SK-N-SH (cell line): ENCODE measurements at regions of chr5 and their contacts with region 1.

Region 1: GRCh38 chr5:150458819-150459557 is 9.4 kb upstream of the RPS14 start:
- DNase-seq: peak; percentile 93
- H3K4me3 ChIP-seq: no peak overlapping the region; a peak in 2 of 4 replicates
- H3K27ac ChIP-seq: no peak overlapping the region
- H3K4me1 ChIP-seq: peaks cover 0 to 8% of the 10 kb centered on the region in 2 experiments; a peak in 2 of 4 replicates
- H3K27me3 ChIP-seq: no peaks in the 10 kb centered on the region
- CTCF ChIP-seq: peak; percentile 70
- EP300 ChIP-seq: no peak
- RAD21 ChIP-seq: peak; percentile 83

Region 2: DNA sequence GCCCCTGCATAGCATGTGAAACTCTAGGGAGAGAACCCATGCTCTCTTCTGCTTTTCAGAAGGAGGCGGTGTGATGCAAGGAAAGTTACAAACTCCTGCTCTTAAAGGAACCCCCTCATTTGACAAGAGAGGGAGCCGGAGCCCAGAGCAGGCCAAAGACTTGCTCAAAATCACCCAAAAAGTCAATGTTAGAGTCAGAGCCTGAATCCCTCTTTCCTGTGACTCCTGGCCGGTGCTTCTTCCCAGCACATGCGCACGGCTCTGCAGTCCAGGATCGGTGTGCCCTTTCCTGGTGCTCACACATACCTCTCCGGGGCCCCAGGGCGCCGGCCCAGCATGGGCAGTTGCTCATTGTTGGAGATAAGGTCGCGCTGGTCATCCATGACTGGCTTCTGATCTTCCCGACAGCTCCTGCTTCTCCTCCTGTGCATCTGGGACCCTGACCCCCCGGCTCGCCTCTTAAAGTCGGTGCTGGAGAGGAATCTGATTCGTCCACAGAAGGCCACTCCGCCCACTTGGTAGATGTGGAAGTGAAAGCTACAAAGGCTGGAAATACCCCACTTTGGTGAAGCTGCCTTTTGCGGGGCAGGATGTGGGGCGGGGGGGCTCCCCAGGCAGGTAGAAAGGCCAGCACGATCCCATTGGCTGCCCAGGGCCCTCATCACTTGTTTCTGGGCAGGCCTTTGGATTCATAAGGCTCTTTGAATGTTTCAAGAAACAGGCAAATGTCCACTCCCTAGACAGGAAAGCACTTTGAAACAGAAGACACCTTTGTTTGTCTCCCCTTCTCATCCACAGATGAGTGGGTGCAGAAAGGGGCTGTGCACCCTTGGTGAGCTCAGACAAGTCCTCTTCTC is 46.4 kb before region 1 on chr5 and contains the start of gene CD74:
- CTCF ChIA-PET with region 1: no interaction called
- POLR2A ChIA-PET with region 1: no interaction called
- DNase-seq: peak; percentile 53
- H3K4me3 ChIP-seq: no peak within 1 kb of the TSS
- H3K27ac ChIP-seq: no peak within 1 kb of the TSS
- H3K4me1 ChIP-seq: peaks cover 4 to 8% of the 10 kb centered on the region in 2 experiments; a peak in 3 of 4 replicates
- H3K27me3 ChIP-seq: no peaks in the 10 kb centered on the region
- CTCF ChIP-seq: no peak
- EP300 ChIP-seq: no peak
- RAD21 ChIP-seq: no peak
- polyA plus RNA-seq, gene CD74: 0.15 and 0.26 TPM in 2 replicates

Region 3: DNA sequence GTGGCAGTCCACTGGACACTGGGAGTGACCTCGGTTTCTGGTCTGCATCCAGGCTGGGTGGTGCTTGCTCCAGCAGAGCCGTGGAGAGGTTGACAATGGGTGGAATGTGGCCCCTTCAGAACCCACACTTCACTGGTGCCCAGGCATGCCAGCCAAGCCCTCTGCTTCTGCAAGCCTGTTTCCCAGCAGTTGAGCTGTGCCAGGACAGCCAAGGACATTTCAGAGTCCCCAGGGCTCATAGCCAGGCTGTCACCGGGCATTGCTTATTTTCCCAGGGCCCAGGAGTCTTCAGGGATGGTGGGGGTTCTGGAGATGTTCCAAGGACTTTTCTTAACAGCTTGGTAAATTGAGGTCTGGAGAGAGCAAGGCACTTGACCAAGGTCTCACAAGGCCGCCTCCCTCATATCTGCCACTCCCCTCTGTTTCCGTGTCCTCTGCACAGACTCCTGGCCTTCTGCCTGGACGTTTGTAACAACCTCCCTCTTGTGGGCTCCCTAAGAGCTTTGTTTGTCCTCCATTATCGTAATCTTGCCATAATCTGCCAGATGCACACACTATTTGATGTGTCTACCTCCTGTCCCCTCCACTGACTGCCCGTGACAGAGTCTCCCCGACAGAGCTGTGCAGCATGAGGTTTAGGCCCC is 45.1 kb after region 1 on chr5:
- CTCF ChIA-PET with region 1: interaction called, 14 read pairs
- POLR2A ChIA-PET with region 1: no interaction called
- DNase-seq: peak; percentile 83
- H3K4me3 ChIP-seq: no peak overlapping the region
- H3K27ac ChIP-seq: peak overlapping the region in 1 of 2 experiments; percentile 97; a peak in 2 of 4 replicates
- H3K4me1 ChIP-seq: peaks cover 0 to 81% of the 10 kb centered on the region in 2 experiments; a peak in 3 of 4 replicates
- H3K27me3 ChIP-seq: no peaks in the 10 kb centered on the region
- CTCF ChIP-seq: no peak
- EP300 ChIP-seq: peak in 1 of 2 experiments; percentile 71; a peak in 2 of 4 replicates
- RAD21 ChIP-seq: peak; percentile 42

Region 4: GRCh38 chr5:150523472-150524350 is 64.7 kb after region 1 on chr5:
- CTCF ChIA-PET with region 1: interaction called, 83 read pairs
- POLR2A ChIA-PET with region 1: no interaction called
- DNase-seq: peak; percentile 79
- H3K4me3 ChIP-seq: no peak overlapping the region; a peak in 1 of 4 replicates
- H3K27ac ChIP-seq: peak overlapping the region in 1 of 2 experiments; percentile 7; a peak in 1 of 4 replicates
- H3K4me1 ChIP-seq: peaks cover 0 to 11% of the 10 kb centered on the region in 2 experiments; a peak in 1 of 4 replicates
- H3K27me3 ChIP-seq: no peaks in the 10 kb centered on the region
- CTCF ChIP-seq: peak; percentile 74
- EP300 ChIP-seq: no peak
- RAD21 ChIP-seq: peak; percentile 78

Region 5: GRCh38 chr5:150544611-150545219 is 85.7 kb after region 1 on chr5:
- CTCF ChIA-PET with region 1: interaction called, 56 read pairs
- POLR2A ChIA-PET with region 1: no interaction called
- DNase-seq: peak; percentile 90
- H3K4me3 ChIP-seq: no peak overlapping the region
- H3K27ac ChIP-seq: peak overlapping the region in 1 of 2 experiments; percentile 70; a peak in 2 of 4 replicates
- H3K4me1 ChIP-seq: peaks cover 4 to 30% of the 10 kb centered on the region in 2 experiments; a peak in 3 of 4 replicates
- H3K27me3 ChIP-seq: no peaks in the 10 kb centered on the region
- CTCF ChIP-seq: peak; percentile 63
- EP300 ChIP-seq: no peak
- RAD21 ChIP-seq: peak; percentile 64